GM12878 (cell line): ENCODE measurements at regions of chr10 and their contacts with region 1.

Region 1: GRCh38 chr10:37584652-37585051 is 272.8 kb downstream of the ZNF248 start:
- DNase-seq: no peak
- ATAC-seq: no peak
- H3K4me3 ChIP-seq: no peak overlapping the region
- H3K27ac ChIP-seq: no peak overlapping the region
- H3K4me1 ChIP-seq: no peaks in the 10 kb centered on the region
- H3K27me3 ChIP-seq: no peaks in the 10 kb centered on the region
- CTCF ChIP-seq: no peak
- EP300 ChIP-seq: no peak
- POLR2A ChIP-seq: no peak
- RAD21 ChIP-seq: no peak

Region 2: DNA sequence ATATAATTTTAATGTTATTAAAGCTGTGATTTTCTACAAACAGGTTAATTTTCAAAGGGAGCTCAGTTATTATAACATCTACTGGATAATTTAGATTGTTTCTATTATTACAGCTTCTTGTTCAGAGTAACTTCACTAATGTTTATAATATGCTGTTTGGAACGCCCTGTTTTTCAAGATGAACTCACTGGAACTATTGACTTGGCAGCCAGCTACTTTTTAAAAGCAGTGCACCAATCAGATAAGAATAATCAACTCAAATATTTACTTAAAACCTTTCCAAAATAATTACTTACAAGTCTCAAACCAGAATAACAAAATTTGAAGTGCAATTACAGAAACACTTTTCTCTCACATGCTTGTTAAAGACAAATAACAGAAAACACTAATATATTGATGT is 1188.1 kb before region 1 on chr10:
- CTCF ChIA-PET with region 1: no interaction called
- POLR2A ChIA-PET with region 1: no interaction called
- RAD21 ChIA-PET with region 1: no interaction called
- SMC1A ChIA-PET with region 1: no interaction called
- in situ Hi-C with region 1: loop called (anchors 5 kb)
- intact Hi-C with region 1: loop called (anchors 5 kb)
- DNase-seq: no peak
- ATAC-seq: no peak
- H3K4me3 ChIP-seq: no peak overlapping the region
- H3K27ac ChIP-seq: no peak overlapping the region
- H3K4me1 ChIP-seq: no peaks in the 10 kb centered on the region
- H3K27me3 ChIP-seq: no peaks in the 10 kb centered on the region
- CTCF ChIP-seq: no peak
- EP300 ChIP-seq: no peak
- POLR2A ChIP-seq: no peak
- RAD21 ChIP-seq: no peak

Region 3: GRCh38 chr10:37344413-37344812 is 240.2 kb before region 1 on chr10:
- CTCF ChIA-PET with region 1: no interaction called
- POLR2A ChIA-PET with region 1: no interaction called
- RAD21 ChIA-PET with region 1: no interaction called
- SMC1A ChIA-PET with region 1: no interaction called
- in situ Hi-C with region 1: no loop called
- intact Hi-C with region 1: no loop called
- DNase-seq: no peak
- ATAC-seq: no peak
- H3K4me3 ChIP-seq: no peak overlapping the region
- H3K27ac ChIP-seq: no peak overlapping the region
- H3K4me1 ChIP-seq: no peaks in the 10 kb centered on the region
- H3K27me3 ChIP-seq: no peaks in the 10 kb centered on the region
- CTCF ChIP-seq: no peak
- EP300 ChIP-seq: no peak
- POLR2A ChIP-seq: no peak
- RAD21 ChIP-seq: no peak

Region 4: GRCh38 chr10:37680716-37681616 is 96.3 kb after region 1 on chr10:
- CTCF ChIA-PET with region 1: no interaction called
- POLR2A ChIA-PET with region 1: no interaction called
- RAD21 ChIA-PET with region 1: no interaction called
- SMC1A ChIA-PET with region 1: no interaction called
- in situ Hi-C with region 1: loop called (anchors 25 kb)
- intact Hi-C with region 1: no loop called
- DNase-seq: no peak
- ATAC-seq: no peak
- H3K4me3 ChIP-seq: no peak overlapping the region
- H3K27ac ChIP-seq: no peak overlapping the region
- H3K4me1 ChIP-seq: no peaks in the 10 kb centered on the region
- H3K27me3 ChIP-seq: no peaks in the 10 kb centered on the region
- CTCF ChIP-seq: no peak
- EP300 ChIP-seq: no peak
- POLR2A ChIP-seq: no peak
- RAD21 ChIP-seq: no peak